CD4-positive, alpha-beta T cell (primary cell): ENCODE measurements at regions of chr5 and their contacts with region 1.

Region 1: GRCh38 chr5:128201065-128201926 is 117.7 kb downstream of the SLC12A2 start:
- DNase-seq: peak; percentile 71 to 88 (median 82)
- ATAC-seq: peak; percentile 66
- H3K4me3 ChIP-seq: no peak overlapping the region
- H3K4me3 Mint-ChIP-seq: no peak overlapping the region
- H3K27ac ChIP-seq: no peak overlapping the region
- H3K27ac Mint-ChIP-seq: no peak overlapping the region
- H3K4me1 ChIP-seq: peaks cover 29% of the 10 kb centered on the region
- H3K4me1 Mint-ChIP-seq: peaks cover 47% of the 10 kb centered on the region
- H3K27me3 ChIP-seq: no peaks in the 10 kb centered on the region
- H3K27me3 Mint-ChIP-seq: no peaks in the 10 kb centered on the region
- CTCF ChIP-seq: peak; percentile 89

Region 2: GRCh38 chr5:127564002-127564769 is 637.1 kb before region 1 on chr5:
- CTCF ChIA-PET with region 1: interaction called, 5 read pairs
- POLR2A ChIA-PET with region 1: interaction called, 5 read pairs
- intact Hi-C with region 1: loop called (anchors 1 kb)
- DNase-seq: peak in 10 of 14 experiments; percentile 14 to 76 (median 40)
- ATAC-seq: peak; percentile 73
- H3K4me3 ChIP-seq: no peak overlapping the region
- H3K4me3 Mint-ChIP-seq: no peak overlapping the region
- H3K27ac ChIP-seq: no peak overlapping the region
- H3K27ac Mint-ChIP-seq: no peak overlapping the region
- H3K4me1 ChIP-seq: no peaks in the 10 kb centered on the region
- H3K4me1 Mint-ChIP-seq: no peaks in the 10 kb centered on the region
- H3K27me3 ChIP-seq: peaks cover 0 to 5% of the 10 kb centered on the region in 2 experiments
- H3K27me3 Mint-ChIP-seq: peaks cover 26% of the 10 kb centered on the region
- CTCF ChIP-seq: peak; percentile 83

Region 3: DNA sequence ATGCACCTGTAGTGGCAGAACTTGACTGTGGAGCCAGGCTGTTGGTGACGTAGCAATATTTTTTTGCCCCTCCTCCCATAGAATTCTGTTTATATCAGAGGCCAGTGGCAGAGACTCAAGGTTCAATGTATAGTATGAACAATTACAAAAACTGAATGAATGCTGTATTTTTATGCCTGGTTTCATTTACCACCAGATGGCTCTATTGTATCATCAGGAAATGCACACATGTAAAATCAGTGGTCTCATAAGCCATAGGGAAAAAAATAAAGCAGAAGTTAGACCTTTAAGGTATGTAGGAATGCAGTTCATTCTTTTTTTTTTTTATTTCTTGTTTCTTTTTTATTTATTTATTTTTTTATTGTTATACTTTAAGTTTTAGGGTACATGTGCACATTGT is 454.5 kb before region 1 on chr5:
- CTCF ChIA-PET with region 1: no interaction called
- POLR2A ChIA-PET with region 1: no interaction called
- intact Hi-C with region 1: loop called (anchors 2 kb)
- DNase-seq: peak in 3 of 14 experiments; percentile 9 to 23 (median 17)
- ATAC-seq: no peak
- H3K4me3 ChIP-seq: no peak overlapping the region
- H3K4me3 Mint-ChIP-seq: no peak overlapping the region
- H3K27ac ChIP-seq: no peak overlapping the region
- H3K27ac Mint-ChIP-seq: no peak overlapping the region
- H3K4me1 ChIP-seq: no peaks in the 10 kb centered on the region
- H3K4me1 Mint-ChIP-seq: peaks cover 1% of the 10 kb centered on the region
- H3K27me3 ChIP-seq: no peaks in the 10 kb centered on the region
- H3K27me3 Mint-ChIP-seq: peaks cover 18% of the 10 kb centered on the region
- CTCF ChIP-seq: no peak

Region 4: GRCh38 chr5:127875235-127876021 is 325.9 kb before region 1 on chr5:
- CTCF ChIA-PET with region 1: interaction called, 7 read pairs
- POLR2A ChIA-PET with region 1: no interaction called
- intact Hi-C with region 1: loop called (anchors 2 to 10 kb)
- DNase-seq: peak in 5 of 14 experiments; percentile 5 to 43 (median 31)
- ATAC-seq: peak; percentile 29
- H3K4me3 ChIP-seq: no peak overlapping the region
- H3K4me3 Mint-ChIP-seq: no peak overlapping the region
- H3K27ac ChIP-seq: no peak overlapping the region
- H3K27ac Mint-ChIP-seq: no peak overlapping the region
- H3K4me1 ChIP-seq: no peaks in the 10 kb centered on the region
- H3K4me1 Mint-ChIP-seq: no peaks in the 10 kb centered on the region
- H3K27me3 ChIP-seq: no peaks in the 10 kb centered on the region
- H3K27me3 Mint-ChIP-seq: peaks cover 5% of the 10 kb centered on the region
- CTCF ChIP-seq: no peak

Region 5: DNA sequence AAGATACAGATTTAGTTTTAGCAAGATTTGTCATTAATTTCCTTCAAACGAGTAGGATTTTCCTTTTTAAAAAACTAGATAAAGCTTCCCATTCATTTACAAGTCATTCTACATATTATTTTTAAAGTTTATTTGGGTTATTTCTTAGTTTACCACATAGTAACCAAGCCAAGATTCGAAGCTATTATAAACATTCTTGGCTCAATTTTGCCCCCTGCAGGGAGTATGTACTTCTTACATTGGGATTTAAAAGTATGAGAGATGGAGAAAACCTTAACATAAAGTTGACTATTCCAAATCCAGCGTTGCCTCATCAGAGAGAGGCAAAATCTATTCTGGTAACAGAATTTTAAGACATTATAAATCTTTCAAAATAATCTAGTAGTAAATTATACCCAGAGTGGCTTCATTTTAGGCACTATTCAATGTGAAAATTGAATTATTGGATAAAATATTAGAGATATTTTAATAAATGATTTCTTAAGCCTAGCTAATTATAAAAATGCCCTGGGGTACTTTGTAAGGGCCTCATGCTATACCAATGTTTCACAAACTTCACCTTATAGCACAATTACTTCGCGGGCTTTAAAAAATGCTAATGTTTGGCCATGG is 297.7 kb after region 1 on chr5:
- CTCF ChIA-PET with region 1: no interaction called
- POLR2A ChIA-PET with region 1: no interaction called
- intact Hi-C with region 1: loop called in 1 of 2 experiments (anchors 5 kb)
- DNase-seq: peak in 2 of 14 experiments; percentile 5 to 7
- ATAC-seq: no peak
- H3K4me3 ChIP-seq: no peak overlapping the region
- H3K4me3 Mint-ChIP-seq: no peak overlapping the region
- H3K27ac ChIP-seq: no peak overlapping the region
- H3K27ac Mint-ChIP-seq: no peak overlapping the region
- H3K4me1 ChIP-seq: no peaks in the 10 kb centered on the region
- H3K4me1 Mint-ChIP-seq: no peaks in the 10 kb centered on the region
- H3K27me3 ChIP-seq: no peaks in the 10 kb centered on the region
- H3K27me3 Mint-ChIP-seq: no peaks in the 10 kb centered on the region
- CTCF ChIP-seq: no peak

Region 6: GRCh38 chr5:129094087-129094923 is 893.0 kb after region 1 on chr5 and contains the start of gene ISOC1:
- CTCF ChIA-PET with region 1: no interaction called
- POLR2A ChIA-PET with region 1: no interaction called
- intact Hi-C with region 1: loop called in 1 of 2 experiments (anchors 10 kb)
- DNase-seq: peak; percentile 80 to 97 (median 90)
- ATAC-seq: peak; percentile 90
- H3K4me3 ChIP-seq: peak within 1 kb of the TSS; percentile 75
- H3K4me3 Mint-ChIP-seq: peak within 1 kb of the TSS; percentile 93
- H3K27ac ChIP-seq: peak within 1 kb of the TSS; percentile 42 to 66
- H3K27ac Mint-ChIP-seq: peak within 1 kb of the TSS; percentile 88
- H3K4me1 ChIP-seq: peaks cover 15% of the 10 kb centered on the region
- H3K4me1 Mint-ChIP-seq: peaks cover 46% of the 10 kb centered on the region
- H3K27me3 ChIP-seq: no peaks in the 10 kb centered on the region
- H3K27me3 Mint-ChIP-seq: peaks cover 6% of the 10 kb centered on the region
- CTCF ChIP-seq: no peak
- total RNA-seq, gene ISOC1: 6.6 to 7.1 TPM

Region 7: GRCh38 chr5:129664337-129664937 is 1463.1 kb after region 1 on chr5:
- CTCF ChIA-PET with region 1: no interaction called
- POLR2A ChIA-PET with region 1: no interaction called
- intact Hi-C with region 1: no loop called
- DNase-seq: peak in 7 of 14 experiments; percentile 1 to 28 (median 15)
- ATAC-seq: no peak
- H3K4me3 ChIP-seq: no peak overlapping the region
- H3K4me3 Mint-ChIP-seq: no peak overlapping the region
- H3K27ac ChIP-seq: no peak overlapping the region
- H3K27ac Mint-ChIP-seq: no peak overlapping the region
- H3K4me1 ChIP-seq: no peaks in the 10 kb centered on the region
- H3K4me1 Mint-ChIP-seq: no peaks in the 10 kb centered on the region
- H3K27me3 ChIP-seq: no peaks in the 10 kb centered on the region
- H3K27me3 Mint-ChIP-seq: peaks cover 5% of the 10 kb centered on the region
- CTCF ChIP-seq: peak; percentile 60